CD8-positive, alpha-beta memory T cell (primary cell): ENCODE measurements at regions of chr21 and their contacts with region 1.

Region 1: DNA sequence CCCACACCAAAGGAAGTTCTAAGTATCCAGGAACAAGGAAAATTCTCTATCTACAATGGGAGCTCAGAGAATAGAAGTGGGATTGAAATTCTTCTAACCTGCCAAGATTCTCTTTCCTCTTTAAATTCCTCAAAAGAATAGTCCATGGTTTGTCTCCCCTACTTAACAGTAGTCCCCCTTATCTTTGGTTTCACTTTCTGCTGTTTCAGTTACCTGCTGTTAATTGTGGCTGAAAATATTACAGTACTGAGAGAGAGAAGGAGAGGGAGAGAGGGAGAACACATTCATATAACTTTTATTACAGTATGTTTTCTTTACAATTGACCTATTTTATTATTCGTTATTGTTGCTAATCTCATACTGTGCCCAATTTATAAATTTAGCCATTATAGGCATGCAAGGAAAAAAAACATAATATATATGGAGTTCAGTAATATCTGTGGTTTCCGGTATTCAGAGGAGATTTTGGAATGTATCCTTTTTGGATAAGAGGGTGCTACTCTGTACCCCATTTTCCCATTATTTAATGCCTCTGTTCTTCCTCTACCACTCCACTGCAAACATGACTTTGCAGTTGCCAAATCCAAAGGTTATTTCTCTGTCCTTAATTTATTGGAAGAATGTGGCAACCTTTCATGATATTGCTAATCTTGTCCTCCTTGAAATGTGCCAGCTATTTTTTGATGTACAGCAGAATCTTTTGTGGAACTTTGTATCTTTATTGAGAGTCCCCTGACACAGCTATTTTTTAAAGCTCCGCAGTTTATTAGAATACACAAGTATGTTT is 68.0 kb downstream of the USP25 start:
- DNase-seq: no peak
- H3K4me3 ChIP-seq: no peak overlapping the region
- H3K4me3 Mint-ChIP-seq: peak overlapping the region in 2 of 7 donors; percentile 8 to 56
- H3K27ac ChIP-seq: no peak overlapping the region
- H3K27ac Mint-ChIP-seq: peak overlapping the region in 6 of 8 donors; percentile 4 to 91 (median 22)
- H3K4me1 ChIP-seq: peaks cover 9% of the 10 kb centered on the region
- H3K4me1 Mint-ChIP-seq: peaks cover 61 to 93% (median 89%) of the 10 kb centered on the region in 3 donors
- H3K27me3 ChIP-seq: no peaks in the 10 kb centered on the region
- H3K27me3 Mint-ChIP-seq: no peaks in the 10 kb centered on the region

Region 2: DNA sequence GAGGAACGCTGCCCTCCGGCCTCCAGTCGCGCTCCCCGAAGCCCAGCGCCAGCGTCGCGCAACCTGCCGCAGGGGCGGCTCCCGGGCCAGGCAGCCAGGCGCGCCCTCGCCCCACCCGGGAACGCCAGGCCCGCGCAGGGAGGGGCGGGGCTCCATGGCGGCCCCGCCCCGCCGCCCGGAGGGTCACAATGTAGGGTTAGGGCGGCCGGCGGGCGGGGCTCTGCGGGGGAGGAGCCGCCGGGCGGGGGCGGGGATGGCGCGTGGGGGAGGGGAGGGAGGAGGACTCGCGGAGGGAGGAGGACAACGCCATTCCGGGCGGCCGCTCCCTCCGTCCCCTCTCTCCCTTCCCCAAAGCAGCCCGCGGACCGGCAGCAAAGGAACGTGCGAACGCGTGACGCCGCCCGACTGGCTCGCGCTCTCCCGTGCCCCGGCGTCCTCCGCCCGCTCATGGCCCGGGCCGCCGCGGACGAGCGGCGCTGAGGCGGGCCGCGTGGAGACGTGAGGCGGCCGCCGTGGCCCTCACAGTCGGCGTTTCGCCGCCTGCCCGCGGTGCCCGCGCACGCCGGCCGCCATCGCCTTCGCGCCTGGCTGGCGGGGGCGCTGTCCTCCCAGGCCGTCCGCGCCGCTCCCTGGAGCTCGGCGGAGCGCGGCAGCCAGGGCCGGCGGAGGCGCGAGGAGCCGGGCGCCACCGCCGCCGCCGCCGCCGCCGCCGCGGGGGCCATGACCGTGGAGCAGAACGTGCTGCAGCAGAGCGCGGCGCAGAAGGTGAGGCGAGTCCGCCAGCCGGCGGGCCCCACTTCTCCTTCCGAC is 67.9 kb before region 1 on chr21 and contains the start of gene USP25:
- CTCF ChIA-PET with region 1: no interaction called
- POLR2A ChIA-PET with region 1: interaction called, 12 read pairs
- DNase-seq: peak; percentile 80 to 91 (median 85)
- H3K4me3 ChIP-seq: peak within 1 kb of the TSS; percentile 75
- H3K4me3 Mint-ChIP-seq: peak within 1 kb of the TSS; percentile 92 to 98 (median 97)
- H3K27ac ChIP-seq: peak within 1 kb of the TSS; percentile 71
- H3K27ac Mint-ChIP-seq: peak within 1 kb of the TSS; percentile 74 to 96 (median 92)
- H3K4me1 ChIP-seq: peaks cover 32% of the 10 kb centered on the region
- H3K4me1 Mint-ChIP-seq: peaks cover 24 to 44% (median 39%) of the 10 kb centered on the region in 3 donors
- H3K27me3 ChIP-seq: no peaks in the 10 kb centered on the region
- H3K27me3 Mint-ChIP-seq: peaks cover 3 to 4% of the 10 kb centered on the region in 2 donors
- total RNA-seq, gene USP25: 32.9 to 36.1 TPM